Transverse colon (tissue), 4 donors: ENCODE measurements at regions of chr10 and their contacts with region 1.

Region 1: GRCh38 chr10:17430647-17431355 is 23.6 kb downstream of the ST8SIA6 start:
- DNase-seq: peak; percentile 72
- H3K4me3 ChIP-seq: no peak overlapping the region
- H3K27ac ChIP-seq: no peak overlapping the region
- H3K4me1 ChIP-seq: peaks cover 0 to 10% (median 0%) of the 10 kb centered on the region in 4 donors
- H3K27me3 ChIP-seq: peaks cover 19% of the 10 kb centered on the region
- CTCF ChIP-seq: peak; percentile 66 to 84 (median 78)
- EP300 ChIP-seq: no peak
- POLR2A ChIP-seq: no peak

Region 2: GRCh38 chr10:16809074-16809718 is 621.6 kb before region 1 on chr10:
- in situ Hi-C with region 1: no loop called
- intact Hi-C with region 1: no loop called
- DNase-seq: peak; percentile 56
- H3K4me3 ChIP-seq: no peak overlapping the region
- H3K27ac ChIP-seq: no peak overlapping the region
- H3K4me1 ChIP-seq: peaks cover 0 to 13% (median 2%) of the 10 kb centered on the region in 4 donors
- H3K27me3 ChIP-seq: no peaks in the 10 kb centered on the region
- CTCF ChIP-seq: peak; percentile 39 to 51 (median 43)
- EP300 ChIP-seq: no peak
- POLR2A ChIP-seq: no peak

Region 3: GRCh38 chr10:16828114-16828568 is 602.7 kb before region 1 on chr10:
- in situ Hi-C with region 1: loop called (anchors 25 kb)
- intact Hi-C with region 1: no loop called
- DNase-seq: peak; percentile 59
- H3K4me3 ChIP-seq: no peak overlapping the region
- H3K27ac ChIP-seq: peak overlapping the region in 2 of 4 donors; percentile 13 to 15
- H3K4me1 ChIP-seq: peaks cover 0 to 19% (median 5%) of the 10 kb centered on the region in 4 donors
- H3K27me3 ChIP-seq: no peaks in the 10 kb centered on the region
- CTCF ChIP-seq: peak; percentile 53 to 68 (median 63)
- EP300 ChIP-seq: no peak
- POLR2A ChIP-seq: no peak

Region 4: DNA sequence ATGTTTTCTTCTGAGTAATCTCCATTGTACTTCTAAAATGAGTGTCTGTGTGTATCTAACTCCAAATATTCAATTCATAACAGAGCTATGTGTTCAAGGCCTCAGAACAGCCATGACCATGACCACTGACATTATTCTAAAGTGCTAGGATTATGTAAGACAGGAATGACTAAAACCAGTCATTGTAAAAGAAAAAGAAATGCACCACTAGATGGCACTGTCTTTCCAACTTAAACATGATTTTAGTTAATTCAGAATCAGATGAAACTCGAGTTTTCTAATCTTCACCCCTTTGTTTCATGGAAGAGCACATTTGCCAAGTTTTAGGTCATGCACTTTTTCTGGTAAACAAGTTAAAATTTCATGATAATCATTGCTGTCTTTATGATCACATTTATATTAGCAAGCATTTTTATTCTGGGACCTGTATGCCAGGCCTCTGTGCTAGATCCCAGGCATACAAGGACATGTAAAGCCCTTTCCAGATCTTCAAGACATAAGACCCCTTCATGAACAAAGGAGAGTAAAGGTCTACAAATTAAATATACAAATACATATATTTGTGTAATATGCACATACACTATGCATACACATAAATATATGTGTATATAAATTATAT is 587.4 kb before region 1 on chr10:
- in situ Hi-C with region 1: loop called (anchors 25 kb)
- intact Hi-C with region 1: loop called (anchors 10 kb)
- DNase-seq: no peak
- H3K4me3 ChIP-seq: no peak overlapping the region
- H3K27ac ChIP-seq: no peak overlapping the region
- H3K4me1 ChIP-seq: no peaks in the 10 kb centered on the region
- H3K27me3 ChIP-seq: no peaks in the 10 kb centered on the region
- CTCF ChIP-seq: peak; percentile 45 to 65 (median 61)
- EP300 ChIP-seq: no peak
- POLR2A ChIP-seq: no peak

Region 5: DNA sequence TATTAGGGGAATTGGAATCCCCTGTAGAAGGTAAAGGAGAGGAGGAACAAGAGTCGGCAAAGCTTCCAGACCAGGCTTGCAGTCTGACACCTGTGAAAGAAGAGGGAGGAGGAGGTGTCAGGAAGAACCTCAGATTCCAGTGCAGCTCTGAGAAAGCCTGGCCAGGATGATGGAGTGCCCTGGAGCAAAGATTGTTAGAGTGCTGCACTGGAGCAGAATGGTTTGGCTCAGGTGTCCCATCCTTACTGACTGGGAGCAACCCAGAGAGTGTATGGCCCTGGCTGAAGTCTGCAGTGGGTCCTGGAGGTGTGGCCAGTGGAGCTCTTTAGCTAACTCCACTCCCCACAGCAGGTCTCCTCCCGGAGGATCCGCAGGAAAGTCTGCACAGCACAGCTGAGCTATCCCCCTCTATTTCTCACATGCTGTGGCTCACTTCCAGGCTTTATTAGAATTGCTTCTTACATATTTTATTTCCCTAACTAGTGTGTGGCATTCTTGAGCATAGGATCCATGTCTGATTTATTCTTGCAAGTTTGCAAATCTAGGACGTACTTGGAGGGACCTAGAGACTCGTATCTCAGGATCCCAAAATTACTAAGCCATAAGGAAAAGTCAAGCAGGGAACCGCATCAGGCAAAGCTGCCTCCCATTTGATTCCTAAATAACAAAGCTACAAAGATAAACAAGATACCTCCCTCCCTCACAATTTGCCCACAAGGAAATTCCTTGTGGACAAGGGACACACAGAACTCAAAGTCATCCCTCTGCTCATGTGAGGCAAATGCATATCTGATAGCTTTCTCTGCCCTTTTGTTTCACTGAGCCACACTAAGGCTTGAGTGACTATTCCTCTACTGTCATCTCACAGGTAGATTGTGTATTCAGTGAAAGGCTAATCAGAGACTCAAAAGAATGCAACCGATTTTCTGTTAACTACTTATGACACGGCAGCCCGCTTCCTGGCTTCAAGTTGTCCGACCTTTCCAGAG is 143.9 kb before region 1 on chr10:
- in situ Hi-C with region 1: loop called in 1 of 4 experiments (anchors 10 kb)
- intact Hi-C with region 1: no loop called
- DNase-seq: no peak
- H3K4me3 ChIP-seq: no peak overlapping the region
- H3K27ac ChIP-seq: no peak overlapping the region
- H3K4me1 ChIP-seq: no peaks in the 10 kb centered on the region
- H3K27me3 ChIP-seq: peaks cover 20% of the 10 kb centered on the region
- CTCF ChIP-seq: no peak
- EP300 ChIP-seq: no peak
- POLR2A ChIP-seq: no peak

Region 6: GRCh38 chr10:17965649-17966235 is 534.9 kb after region 1 on chr10:
- in situ Hi-C with region 1: no loop called
- intact Hi-C with region 1: no loop called
- DNase-seq: peak; percentile 14
- H3K4me3 ChIP-seq: no peak overlapping the region
- H3K27ac ChIP-seq: peak overlapping the region in 3 of 4 donors; percentile 37 to 49 (median 46)
- H3K4me1 ChIP-seq: peaks cover 0 to 8% (median 5%) of the 10 kb centered on the region in 4 donors
- H3K27me3 ChIP-seq: no peaks in the 10 kb centered on the region
- CTCF ChIP-seq: no peak
- EP300 ChIP-seq: no peak
- POLR2A ChIP-seq: no peak